Activated naive CD4-positive, alpha-beta T cell treated with anti-CD3 and anti-CD28 coated beads for 36 hours (primary cell): ENCODE measurements at regions of chr6 and their contacts with region 1.

Region 1: GRCh38 chr6:37483917-37484785 is 15.5 kb downstream of the CCDC167 start:
- DNase-seq: peak; percentile 79
- H3K4me3 Mint-ChIP-seq: no peak overlapping the region
- H3K27ac Mint-ChIP-seq: no peak overlapping the region
- H3K4me1 Mint-ChIP-seq: peaks cover 14% of the 10 kb centered on the region
- H3K27me3 Mint-ChIP-seq: no peaks in the 10 kb centered on the region

Region 2: GRCh38 chr6:37381579-37381978 is 102.6 kb before region 1 on chr6:
- CTCF ChIA-PET with region 1: no interaction called
- intact Hi-C with region 1: loop called (anchors 2 kb)
- DNase-seq: peak; percentile 43
- H3K4me3 Mint-ChIP-seq: no peak overlapping the region
- H3K27ac Mint-ChIP-seq: no peak overlapping the region
- H3K4me1 Mint-ChIP-seq: no peaks in the 10 kb centered on the region
- H3K27me3 Mint-ChIP-seq: no peaks in the 10 kb centered on the region